ENCODE measurements at regions of chr9 and their contacts with region 1.

Region 1: GRCh38 chr9:95875305-95876137 is at the start of gene ERCC6L2:
- DNase-seq: peak; percentile 94 to 96 (median 95)
- H3K4me3 ChIP-seq: peak within 1 kb of the TSS in 2 of 3 experiments; percentile 89 to 98
- H3K4me3 Mint-ChIP-seq: peak within 1 kb of the TSS in 1 of 2 donors; percentile 96
- H3K27ac ChIP-seq: peak within 1 kb of the TSS; percentile 99
- H3K27ac Mint-ChIP-seq: peak within 1 kb of the TSS in 6 of 7 donors; percentile 99 to 100 (median 100)
- H3K4me1 ChIP-seq: peaks cover 6 to 9% of the 10 kb centered on the region in 2 donors
- H3K4me1 Mint-ChIP-seq: peaks cover 12% of the 10 kb centered on the region
- H3K27me3 ChIP-seq: no peaks in the 10 kb centered on the region
- H3K27me3 Mint-ChIP-seq: no peaks in the 10 kb centered on the region
- CTCF ChIP-seq: no peak
- polyA plus RNA-seq, gene ERCC6L2: 7.1 to 18.9 (median 7.2) TPM

Region 2: GRCh38 chr9:94269264-94269663 is 1606.3 kb before region 1 on chr9:
- intact Hi-C with region 1: loop called in 1 of 2 experiments (anchors 10 kb)
- DNase-seq: no peak
- H3K4me3 ChIP-seq: no peak overlapping the region
- H3K4me3 Mint-ChIP-seq: no peak overlapping the region
- H3K27ac ChIP-seq: no peak overlapping the region
- H3K27ac Mint-ChIP-seq: peak overlapping the region in 2 of 7 donors; percentile 27 to 68
- H3K4me1 ChIP-seq: no peaks in the 10 kb centered on the region
- H3K4me1 Mint-ChIP-seq: peaks cover 3% of the 10 kb centered on the region
- H3K27me3 ChIP-seq: no peaks in the 10 kb centered on the region
- H3K27me3 Mint-ChIP-seq: peaks cover 0 to 1% (median 0%) of the 10 kb centered on the region in 3 donors
- CTCF ChIP-seq: no peak

Region 3: DNA sequence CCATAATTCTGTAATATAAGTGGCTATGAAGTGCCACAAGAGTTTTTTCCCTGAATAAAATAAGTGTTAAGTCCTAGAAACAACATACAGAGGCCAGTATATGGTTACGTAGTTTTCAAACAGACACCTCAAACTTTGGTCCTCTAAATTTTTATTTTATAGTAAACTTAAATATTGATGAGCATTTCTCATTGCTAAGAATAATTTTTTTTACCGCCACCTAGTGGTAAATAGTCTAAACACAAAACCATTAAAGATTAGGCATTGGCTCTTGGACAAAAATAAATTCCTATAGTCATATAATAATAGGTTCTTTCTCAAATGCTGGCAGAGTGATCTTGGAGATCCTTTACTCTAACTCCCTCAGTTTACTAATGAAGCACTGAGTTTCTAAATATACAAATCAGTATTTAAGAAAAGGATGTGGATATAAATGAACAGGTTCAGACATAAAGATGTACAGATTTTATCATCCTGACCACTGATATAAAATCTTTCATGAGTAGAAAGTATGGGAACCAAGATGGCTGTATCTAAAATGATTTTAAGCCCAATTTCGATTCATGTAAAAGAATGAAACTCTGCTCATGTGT is 694.2 kb before region 1 on chr9:
- intact Hi-C with region 1: no loop called
- DNase-seq: peak in 1 of 3 donors; percentile 13
- H3K4me3 ChIP-seq: no peak overlapping the region
- H3K4me3 Mint-ChIP-seq: no peak overlapping the region
- H3K27ac ChIP-seq: no peak overlapping the region
- H3K27ac Mint-ChIP-seq: no peak overlapping the region
- H3K4me1 ChIP-seq: no peaks in the 10 kb centered on the region
- H3K4me1 Mint-ChIP-seq: no peaks in the 10 kb centered on the region
- H3K27me3 ChIP-seq: no peaks in the 10 kb centered on the region
- H3K27me3 Mint-ChIP-seq: peaks cover 0 to 4% (median 2%) of the 10 kb centered on the region in 3 donors
- CTCF ChIP-seq: peak; percentile 81

Region 4: GRCh38 chr9:95834281-95834907 is 41.1 kb before region 1 on chr9:
- intact Hi-C with region 1: no loop called
- DNase-seq: no peak
- H3K4me3 ChIP-seq: no peak overlapping the region
- H3K4me3 Mint-ChIP-seq: no peak overlapping the region
- H3K27ac ChIP-seq: no peak overlapping the region
- H3K27ac Mint-ChIP-seq: no peak overlapping the region
- H3K4me1 ChIP-seq: no peaks in the 10 kb centered on the region
- H3K4me1 Mint-ChIP-seq: no peaks in the 10 kb centered on the region
- H3K27me3 ChIP-seq: no peaks in the 10 kb centered on the region
- H3K27me3 Mint-ChIP-seq: peaks cover 2% of the 10 kb centered on the region in 3 donors
- CTCF ChIP-seq: no peak

Region 5: GRCh38 chr9:95901506-95901905 is 26.0 kb after region 1 on chr9:
- intact Hi-C with region 1: no loop called
- DNase-seq: no peak
- H3K4me3 ChIP-seq: no peak overlapping the region
- H3K4me3 Mint-ChIP-seq: no peak overlapping the region
- H3K27ac ChIP-seq: no peak overlapping the region
- H3K27ac Mint-ChIP-seq: no peak overlapping the region
- H3K4me1 ChIP-seq: no peaks in the 10 kb centered on the region
- H3K4me1 Mint-ChIP-seq: no peaks in the 10 kb centered on the region
- H3K27me3 ChIP-seq: no peaks in the 10 kb centered on the region
- H3K27me3 Mint-ChIP-seq: no peaks in the 10 kb centered on the region
- CTCF ChIP-seq: no peak

Region 6: GRCh38 chr9:96139592-96140295 is 264.2 kb after region 1 on chr9:
- intact Hi-C with region 1: loop called in 1 of 2 experiments (anchors 5 kb)
- DNase-seq: peak; percentile 60 to 74 (median 63)
- H3K4me3 ChIP-seq: no peak overlapping the region
- H3K4me3 Mint-ChIP-seq: peak overlapping the region; percentile 42 to 45
- H3K27ac ChIP-seq: peak overlapping the region; percentile 71 to 73
- H3K27ac Mint-ChIP-seq: peak overlapping the region; percentile 70 to 93 (median 88)
- H3K4me1 ChIP-seq: peaks cover 64 to 88% of the 10 kb centered on the region in 2 donors
- H3K4me1 Mint-ChIP-seq: peaks cover 74% of the 10 kb centered on the region
- H3K27me3 ChIP-seq: no peaks in the 10 kb centered on the region
- H3K27me3 Mint-ChIP-seq: no peaks in the 10 kb centered on the region
- CTCF ChIP-seq: no peak